AG04450 (cell line): ENCODE measurements at regions of chr2 and their contacts with region 1.

Region 1: GRCh38 chr2:165874445-165875039 is 79.0 kb downstream of the TTC21B start:
- DNase-seq: peak; percentile 41
- H3K4me3 ChIP-seq: no peak overlapping the region
- H3K27ac ChIP-seq: no peak overlapping the region
- H3K27me3 ChIP-seq: no peaks in the 10 kb centered on the region
- CTCF ChIP-seq: peak; percentile 84

Region 2: GRCh38 chr2:165239230-165239629 is 635.3 kb before region 1 on chr2 and contains the start of gene SCN2A:
- CTCF ChIA-PET with region 1: interaction called, 11 read pairs
- POLR2A ChIA-PET with region 1: no interaction called
- DNase-seq: peak; percentile 2
- H3K4me3 ChIP-seq: no peak within 1 kb of the TSS
- H3K27ac ChIP-seq: no peak within 1 kb of the TSS
- H3K27me3 ChIP-seq: no peaks in the 10 kb centered on the region
- CTCF ChIP-seq: peak; percentile 58
- polyA plus RNA-seq, gene SCN2A: 1.7 and 2.5 TPM in 2 replicates

Region 3: GRCh38 chr2:165401285-165401852 is 473.2 kb before region 1 on chr2:
- CTCF ChIA-PET with region 1: interaction called, 133 read pairs
- POLR2A ChIA-PET with region 1: no interaction called
- DNase-seq: peak; percentile 55
- H3K4me3 ChIP-seq: no peak overlapping the region
- H3K27ac ChIP-seq: no peak overlapping the region
- H3K27me3 ChIP-seq: no peaks in the 10 kb centered on the region
- CTCF ChIP-seq: peak; percentile 79

Region 4: GRCh38 chr2:165698444-165698894 is 176.1 kb before region 1 on chr2:
- CTCF ChIA-PET with region 1: interaction called, 10 read pairs
- POLR2A ChIA-PET with region 1: no interaction called
- DNase-seq: peak; percentile 10
- H3K4me3 ChIP-seq: no peak overlapping the region
- H3K27ac ChIP-seq: no peak overlapping the region
- H3K27me3 ChIP-seq: no peaks in the 10 kb centered on the region
- CTCF ChIP-seq: peak; percentile 66

Region 5: DNA sequence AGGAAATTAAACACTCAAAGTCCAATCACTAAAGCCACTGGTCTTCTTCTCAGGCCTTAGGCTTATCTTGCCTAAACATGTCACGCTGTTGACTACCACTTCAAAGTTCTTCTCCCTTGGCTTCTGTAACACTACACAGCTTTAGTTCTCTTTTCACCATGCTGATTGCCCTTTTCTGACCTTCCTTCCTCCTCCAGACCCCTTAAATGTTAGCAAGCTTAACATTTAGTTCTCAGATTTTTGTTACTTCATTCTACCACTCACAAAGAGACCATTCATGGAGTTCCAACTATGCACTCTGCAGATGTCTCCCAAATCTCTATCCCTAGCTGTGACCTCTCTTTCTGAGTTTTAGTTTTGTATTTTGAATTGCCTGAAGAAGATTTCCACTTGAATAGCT is 14.6 kb after region 1 on chr2:
- CTCF ChIA-PET with region 1: interaction called, 42 read pairs
- POLR2A ChIA-PET with region 1: no interaction called
- DNase-seq: no peak
- H3K4me3 ChIP-seq: no peak overlapping the region
- H3K27ac ChIP-seq: no peak overlapping the region
- H3K27me3 ChIP-seq: no peaks in the 10 kb centered on the region
- CTCF ChIP-seq: no peak